ENCODE measurements at regions of chr5 and their contacts with region 1.

Region 1: GRCh38 chr5:160418561-160419457 is at the start of gene SLU7:
- DNase-seq: peak; percentile 84 to 95 (median 92)
- ATAC-seq: peak; percentile 78 to 85
- H3K4me3 Mint-ChIP-seq: peak within 1 kb of the TSS; percentile 94 to 99 (median 98)
- H3K27ac Mint-ChIP-seq: peak within 1 kb of the TSS; percentile 95 to 100 (median 98)
- H3K4me1 Mint-ChIP-seq: peaks cover 30 to 79% (median 70%) of the 10 kb centered on the region in 4 donors
- H3K27me3 Mint-ChIP-seq: no peaks in the 10 kb centered on the region
- polyA plus RNA-seq, gene SLU7: 70.5 to 79.8 (median 71.1) TPM

Region 2: DNA sequence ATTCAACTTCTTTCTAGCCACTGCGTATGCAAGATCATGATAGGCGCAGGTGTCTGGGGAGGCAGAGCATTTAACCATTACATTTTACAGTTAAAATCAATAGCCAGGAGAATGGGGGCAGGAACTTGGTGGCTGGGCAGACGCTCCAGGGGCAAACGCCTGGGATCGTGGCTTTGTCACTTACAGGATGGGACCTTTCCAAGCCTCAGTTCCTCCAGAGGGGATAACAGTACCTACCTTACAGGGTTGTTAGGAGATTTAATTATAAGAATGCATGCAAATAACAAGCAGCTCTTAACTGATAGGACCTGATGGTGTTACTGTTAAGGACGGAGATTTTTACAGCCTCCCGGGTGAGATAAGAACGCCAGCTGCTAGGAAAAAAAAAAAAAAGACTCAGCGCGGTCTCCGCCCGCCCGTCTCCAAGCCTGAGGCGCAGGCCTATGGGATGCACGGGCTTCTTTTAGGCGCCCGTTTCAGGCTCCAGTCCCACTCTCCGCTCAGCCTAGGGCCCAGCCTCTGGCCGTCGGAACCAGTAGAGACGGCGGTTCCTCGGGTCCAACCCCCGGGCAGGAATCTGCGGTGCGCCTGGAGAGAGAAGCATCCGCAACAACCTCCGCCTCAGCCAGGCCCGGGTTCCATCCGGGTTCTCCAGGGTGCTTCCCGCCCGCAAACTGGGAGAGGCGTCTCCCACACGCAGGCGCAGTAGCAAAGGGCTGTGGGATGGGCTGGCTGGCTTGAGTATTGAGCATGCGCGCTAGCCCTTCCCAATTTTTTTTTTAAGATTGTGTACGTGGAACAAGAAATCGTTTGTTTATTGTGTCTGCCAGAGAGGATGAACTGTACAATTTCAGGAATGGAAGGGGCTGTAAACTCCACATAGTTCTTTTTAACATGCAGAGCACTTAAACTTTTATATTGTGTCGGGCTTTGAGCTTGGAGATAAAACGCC is 19.1 kb before region 1 on chr5 and contains the start of gene FAM200C:
- POLR2A ChIA-PET with region 1: interaction called, 13 read pairs
- DNase-seq: peak; percentile 32 to 79 (median 54)
- ATAC-seq: peak; percentile 77 to 86
- H3K4me3 Mint-ChIP-seq: peak within 1 kb of the TSS; percentile 90 to 95 (median 92)
- H3K27ac Mint-ChIP-seq: peak within 1 kb of the TSS; percentile 56 to 91 (median 86)
- H3K4me1 Mint-ChIP-seq: peaks cover 6 to 22% (median 19%) of the 10 kb centered on the region in 4 donors
- H3K27me3 Mint-ChIP-seq: no peaks in the 10 kb centered on the region
- polyA plus RNA-seq, gene FAM200C: 0.15 to 0.47 (median 0.24) TPM

Region 3: DNA sequence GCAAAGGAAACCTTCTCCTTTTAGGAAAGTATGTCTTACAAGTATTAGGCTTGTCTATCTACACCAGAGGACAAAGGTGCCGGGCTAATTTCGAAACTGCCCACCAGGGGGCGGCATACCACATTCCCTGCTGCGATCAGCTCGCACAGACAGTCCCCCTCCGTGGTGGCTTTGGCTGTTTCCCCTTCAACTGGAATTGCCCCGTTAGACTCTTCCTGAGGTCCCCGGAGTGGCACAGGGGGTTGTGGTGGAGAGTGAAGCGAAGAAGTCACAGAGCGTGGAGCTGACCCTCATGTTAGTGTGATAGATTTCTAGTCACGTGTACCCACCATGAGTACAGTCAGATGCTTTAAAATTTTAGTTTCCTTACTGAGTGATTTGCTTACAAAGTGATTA is 20.4 kb after region 1 on chr5:
- POLR2A ChIA-PET with region 1: interaction called, 15 read pairs
- DNase-seq: peak; percentile 70 to 95 (median 83)
- ATAC-seq: peak; percentile 81 to 85
- H3K4me3 Mint-ChIP-seq: peak overlapping the region; percentile 81 to 95 (median 87)
- H3K27ac Mint-ChIP-seq: peak overlapping the region; percentile 14 to 94 (median 89)
- H3K4me1 Mint-ChIP-seq: peaks cover 4 to 23% (median 10%) of the 10 kb centered on the region in 4 donors
- H3K27me3 Mint-ChIP-seq: peaks cover 0 to 20% (median 9%) of the 10 kb centered on the region in 5 donors